Brain microvascular endothelial cell (primary cell): ENCODE measurements at regions of chr6 and their contacts with region 1.

Region 1: GRCh38 chr6:77457720-77458349 is 5.5 kb downstream of the HTR1B start:
- DNase-seq: peak; percentile 96
- H3K4me3 ChIP-seq: no peak overlapping the region
- H3K27ac ChIP-seq: peak overlapping the region; percentile 97
- H3K27me3 ChIP-seq: no peaks in the 10 kb centered on the region
- CTCF ChIP-seq: peak; percentile 89

Region 2: DNA sequence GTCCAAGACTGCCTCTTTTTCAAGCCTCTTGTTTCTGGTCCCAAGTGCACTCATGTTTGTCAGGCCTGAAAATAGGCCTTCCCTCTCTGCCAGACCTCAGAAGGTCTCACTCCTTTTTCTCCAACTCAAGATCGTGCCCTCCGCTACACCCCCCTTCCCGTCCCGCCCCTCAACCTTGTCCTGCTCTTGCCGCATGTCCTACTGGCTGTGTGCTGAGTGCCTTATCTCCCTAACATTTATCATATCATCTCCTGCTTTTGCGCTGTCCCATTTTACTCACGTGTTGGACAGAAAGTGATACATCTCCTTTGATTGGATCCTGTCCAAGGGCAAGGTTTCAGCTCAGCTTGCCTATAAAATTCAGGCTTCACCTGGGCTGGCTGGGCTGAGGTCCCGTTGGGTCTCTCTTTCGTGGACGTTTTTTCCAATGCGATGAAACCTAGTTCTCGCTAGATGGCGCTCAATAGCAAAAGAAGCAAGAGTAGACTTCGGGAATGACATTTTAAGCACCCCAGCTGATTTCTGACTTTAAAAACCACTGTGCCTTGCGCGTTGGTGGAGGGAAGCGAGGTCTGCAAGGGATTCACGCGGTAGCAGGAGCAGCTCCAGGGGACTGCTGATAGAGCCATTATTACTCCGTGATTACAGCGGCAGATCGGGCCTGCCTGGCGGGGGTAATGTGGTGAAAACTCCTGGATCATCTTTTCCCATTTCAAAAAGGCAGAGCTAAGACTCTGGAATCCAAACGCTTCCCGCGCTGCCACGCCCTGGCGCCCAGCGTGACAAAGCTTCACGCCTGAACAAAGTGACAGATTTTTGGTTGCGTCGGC is 1523.0 kb before region 1 on chr6:
- in situ Hi-C with region 1: loop called (anchors 25 kb)
- DNase-seq: peak; percentile 73
- H3K4me3 ChIP-seq: peak overlapping the region; percentile 58
- H3K27ac ChIP-seq: no peak overlapping the region
- H3K27me3 ChIP-seq: no peaks in the 10 kb centered on the region
- CTCF ChIP-seq: peak; percentile 86

Region 3: GRCh38 chr6:76682842-76683241 is 775.0 kb before region 1 on chr6:
- in situ Hi-C with region 1: loop called (anchors 25 kb)
- DNase-seq: no peak
- H3K4me3 ChIP-seq: no peak overlapping the region
- H3K27ac ChIP-seq: no peak overlapping the region
- H3K27me3 ChIP-seq: no peaks in the 10 kb centered on the region
- CTCF ChIP-seq: peak; percentile 8